ENCODE measurements at regions of chr14 and their contacts with region 1.

Region 1: DNA sequence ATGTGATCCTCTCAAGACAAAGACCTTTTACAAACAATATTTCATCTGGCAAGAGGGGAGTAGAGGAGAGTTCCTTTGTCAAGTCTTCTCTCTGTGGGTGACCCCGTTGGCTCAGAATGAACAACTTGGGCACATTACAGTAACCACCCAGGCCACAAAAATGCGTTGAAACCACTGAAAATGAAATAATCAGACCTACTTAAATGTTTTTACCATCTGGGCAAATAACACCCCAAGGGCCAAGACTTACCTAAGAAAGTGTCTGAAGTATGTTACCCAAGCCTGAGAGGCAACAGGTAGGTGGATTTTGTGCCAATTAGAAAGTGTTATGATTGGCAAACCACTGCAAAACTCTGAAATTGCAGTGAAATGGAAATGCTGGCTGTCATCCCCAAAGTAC is 1.3 kb downstream of the TC2N start:
- DNase-seq: peak in 2 of 5 donors; percentile 36 to 41
- H3K4me3 ChIP-seq: peak overlapping the region; percentile 69
- H3K4me3 Mint-ChIP-seq: peak overlapping the region; percentile 97 to 100 (median 100)
- H3K27ac ChIP-seq: peak overlapping the region; percentile 38
- H3K27ac Mint-ChIP-seq: peak overlapping the region; percentile 97 to 100 (median 98)
- H3K4me1 ChIP-seq: peaks cover 72% of the 10 kb centered on the region
- H3K4me1 Mint-ChIP-seq: peaks cover 70 to 81% (median 78%) of the 10 kb centered on the region in 3 donors
- H3K27me3 ChIP-seq: no peaks in the 10 kb centered on the region
- H3K27me3 Mint-ChIP-seq: no peaks in the 10 kb centered on the region

Region 2: GRCh38 chr14:91836119-91836881 is 29.8 kb before region 1 on chr14:
- CTCF ChIA-PET with region 1: interaction called, 3 read pairs
- POLR2A ChIA-PET with region 1: interaction called, 15 read pairs
- DNase-seq: peak; percentile 77 to 91 (median 84)
- H3K4me3 ChIP-seq: peak overlapping the region; percentile 46
- H3K4me3 Mint-ChIP-seq: peak overlapping the region; percentile 85 to 95 (median 86)
- H3K27ac ChIP-seq: peak overlapping the region; percentile 21
- H3K27ac Mint-ChIP-seq: peak overlapping the region; percentile 79 to 96 (median 90)
- H3K4me1 ChIP-seq: peaks cover 57% of the 10 kb centered on the region
- H3K4me1 Mint-ChIP-seq: peaks cover 75 to 92% (median 91%) of the 10 kb centered on the region in 3 donors
- H3K27me3 ChIP-seq: no peaks in the 10 kb centered on the region
- H3K27me3 Mint-ChIP-seq: no peaks in the 10 kb centered on the region

Region 3: GRCh38 chr14:91911474-91912032 is 45.5 kb after region 1 on chr14:
- CTCF ChIA-PET with region 1: interaction called, 13 read pairs
- POLR2A ChIA-PET with region 1: no interaction called
- DNase-seq: peak in 4 of 5 donors; percentile 28 to 66 (median 52)
- H3K4me3 ChIP-seq: no peak overlapping the region
- H3K4me3 Mint-ChIP-seq: no peak overlapping the region
- H3K27ac ChIP-seq: no peak overlapping the region
- H3K27ac Mint-ChIP-seq: peak overlapping the region in 3 of 8 donors; percentile 37 to 83 (median 77)
- H3K4me1 ChIP-seq: peaks cover 5% of the 10 kb centered on the region
- H3K4me1 Mint-ChIP-seq: peaks cover 19 to 35% (median 23%) of the 10 kb centered on the region in 3 donors
- H3K27me3 ChIP-seq: no peaks in the 10 kb centered on the region
- H3K27me3 Mint-ChIP-seq: peaks cover 0 to 3% of the 10 kb centered on the region in 2 donors